Calu3 (cell line): ENCODE measurements at regions of chrX and their contacts with region 1.

Region 1: DNA sequence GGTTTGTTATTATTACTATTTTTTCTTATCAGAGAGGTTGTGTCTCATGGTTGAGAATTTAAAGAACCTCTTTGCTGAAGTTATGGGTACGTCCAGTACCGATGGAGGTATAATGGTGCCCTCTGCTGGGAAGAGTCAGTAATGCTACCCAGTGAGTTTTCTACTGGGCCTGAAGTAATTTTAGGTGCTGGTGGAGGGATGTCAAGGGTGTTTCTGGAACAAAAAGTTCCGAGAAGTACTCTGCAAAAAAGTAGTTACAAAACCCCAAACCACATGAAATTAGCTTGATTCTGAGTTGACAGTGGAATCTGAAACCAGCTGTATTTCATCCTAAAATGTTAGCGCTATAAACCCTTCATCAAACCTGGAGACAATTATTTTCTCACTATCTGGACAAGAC is 102.5 kb upstream of the MID1 start:
- DNase-seq: peak; percentile 66
- H3K4me3 Mint-ChIP-seq: no peak overlapping the region
- H3K27ac Mint-ChIP-seq: no peak overlapping the region
- H3K4me1 Mint-ChIP-seq: peaks cover 6% of the 10 kb centered on the region
- H3K27me3 Mint-ChIP-seq: no peaks in the 10 kb centered on the region
- CTCF ChIP-seq: no peak

Region 2: DNA sequence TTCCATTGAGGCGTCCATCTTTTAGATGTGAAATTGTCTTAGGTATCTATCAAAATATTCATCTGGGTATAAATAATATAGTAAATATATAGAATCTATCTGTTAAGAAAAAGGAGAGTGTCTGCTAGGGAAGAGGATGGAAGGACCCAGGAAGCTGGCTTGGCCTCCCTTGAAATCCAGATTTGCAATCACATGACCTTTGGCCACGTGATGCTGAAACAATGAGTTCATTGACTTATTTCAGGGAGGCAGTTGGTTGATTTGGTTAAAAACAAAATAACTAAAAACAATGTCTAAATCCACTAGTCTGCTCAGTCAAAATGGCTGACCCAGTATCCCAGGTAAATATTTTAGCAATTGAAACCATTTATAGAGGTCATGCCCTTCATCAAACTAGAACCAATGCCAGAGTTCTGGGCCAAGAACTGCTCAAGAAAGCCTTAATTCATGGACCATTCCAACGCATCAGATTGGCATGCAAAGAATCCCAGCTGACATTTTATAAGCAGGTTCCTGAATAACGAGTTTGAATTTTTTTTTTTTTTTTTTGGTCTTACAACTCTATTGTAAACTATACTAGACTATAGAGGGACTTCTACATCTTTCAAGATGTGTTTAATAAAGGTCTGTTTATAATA is 275.2 kb before region 1 on chrX:
- CTCF ChIA-PET with region 1: no interaction called
- intact Hi-C with region 1: loop called (anchors 5 kb)
- DNase-seq: peak; percentile 49
- H3K4me3 Mint-ChIP-seq: no peak overlapping the region
- H3K27ac Mint-ChIP-seq: peak overlapping the region; percentile 91
- H3K4me1 Mint-ChIP-seq: peaks cover 39% of the 10 kb centered on the region
- H3K27me3 Mint-ChIP-seq: no peaks in the 10 kb centered on the region
- CTCF ChIP-seq: no peak

Region 3: DNA sequence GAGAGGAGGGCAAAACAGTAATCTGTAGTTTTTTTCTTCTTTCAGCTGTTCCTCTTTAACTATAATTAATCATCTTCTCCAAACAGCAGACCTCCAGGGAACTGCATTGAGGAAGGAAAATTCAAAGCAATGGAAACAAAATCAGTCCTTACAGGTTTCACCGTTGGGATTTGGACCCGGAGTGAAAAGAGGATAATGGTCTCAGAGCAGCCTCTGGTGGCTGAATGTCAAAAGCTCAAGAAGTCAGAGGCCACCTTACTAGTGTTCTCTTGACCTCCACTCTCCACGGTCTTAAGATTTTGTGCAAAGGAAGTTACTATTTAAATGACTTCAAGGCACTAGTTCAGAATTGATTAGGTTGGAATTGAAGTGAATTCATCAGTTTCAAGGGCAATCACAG is 86.5 kb before region 1 on chrX:
- CTCF ChIA-PET with region 1: no interaction called
- intact Hi-C with region 1: no loop called
- DNase-seq: peak; percentile 56
- H3K4me3 Mint-ChIP-seq: peak overlapping the region; percentile 28
- H3K27ac Mint-ChIP-seq: peak overlapping the region; percentile 75
- H3K4me1 Mint-ChIP-seq: peaks cover 22% of the 10 kb centered on the region
- H3K27me3 Mint-ChIP-seq: no peaks in the 10 kb centered on the region
- CTCF ChIP-seq: peak; percentile 28

Region 4: GRCh38 chrX:10781847-10782530 is 59.1 kb after region 1 on chrX:
- CTCF ChIA-PET with region 1: no interaction called
- intact Hi-C with region 1: no loop called
- DNase-seq: no peak
- H3K4me3 Mint-ChIP-seq: no peak overlapping the region
- H3K27ac Mint-ChIP-seq: no peak overlapping the region
- H3K4me1 Mint-ChIP-seq: peaks cover 23% of the 10 kb centered on the region
- H3K27me3 Mint-ChIP-seq: no peaks in the 10 kb centered on the region
- CTCF ChIP-seq: no peak

Region 5: GRCh38 chrX:10821293-10821692 is 98.4 kb after region 1 on chrX:
- CTCF ChIA-PET with region 1: no interaction called
- intact Hi-C with region 1: no loop called
- DNase-seq: peak; percentile 8
- H3K4me3 Mint-ChIP-seq: peak overlapping the region; percentile 35
- H3K27ac Mint-ChIP-seq: peak overlapping the region; percentile 6
- H3K4me1 Mint-ChIP-seq: peaks cover 22% of the 10 kb centered on the region
- H3K27me3 Mint-ChIP-seq: no peaks in the 10 kb centered on the region
- CTCF ChIP-seq: no peak